ENCODE measurements at regions of chr1 and their contacts with region 1.

Region 1: GRCh38 chr1:151059078-151059907 is at the start of gene CDC42SE1:
- DNase-seq: peak in 1 of 2 experiments; percentile 85
- H3K4me3 ChIP-seq: peak within 1 kb of the TSS; percentile 80 to 97 (median 89)
- H3K27ac ChIP-seq: peak within 1 kb of the TSS; percentile 63
- H3K4me1 ChIP-seq: peaks cover 4 to 14% (median 6%) of the 10 kb centered on the region in 4 experiments; a peak in 6 of 7 replicates
- H3K27me3 ChIP-seq: no peaks in the 10 kb centered on the region
- CTCF ChIP-seq: peak; percentile 75 to 82 (median 80)
- EP300 ChIP-seq: peak in 1 of 2 experiments; percentile 4; a peak in 1 of 3 replicates
- POLR2A ChIP-seq: peak in 1 of 2 experiments; percentile 29; a peak in 1 of 3 replicates
- RAD21 ChIP-seq: peak; percentile 20 to 50; a peak in 3 of 4 replicates
- total RNA-seq, gene CDC42SE1: 67.8 and 74.1 TPM in 2 replicates

Region 2: GRCh38 chr1:151006327-151007052 is 52.8 kb before region 1 on chr1 and contains the start of gene MINDY1:
- CTCF ChIA-PET with region 1: interaction called, 5 read pairs
- POLR2A ChIA-PET with region 1: interaction called, 12 read pairs
- DNase-seq: peak; percentile 33 to 67
- H3K4me3 ChIP-seq: peak within 1 kb of the TSS; percentile 6 to 94 (median 41); a peak in 7 of 8 replicates
- H3K27ac ChIP-seq: peak within 1 kb of the TSS; percentile 53
- H3K4me1 ChIP-seq: peaks cover 9 to 12% (median 9%) of the 10 kb centered on the region in 4 experiments; a peak in 6 of 7 replicates
- H3K27me3 ChIP-seq: no peaks in the 10 kb centered on the region
- CTCF ChIP-seq: peak; percentile 53 to 70 (median 62)
- EP300 ChIP-seq: no peak
- POLR2A ChIP-seq: peak; percentile 43 to 84
- RAD21 ChIP-seq: peak; percentile 59 to 66
- total RNA-seq, gene MINDY1: 10.6 and 11.4 TPM in 2 replicates

Region 3: GRCh38 chr1:151024540-151025146 is 34.6 kb before region 1 on chr1:
- CTCF ChIA-PET with region 1: interaction called, 20 read pairs
- POLR2A ChIA-PET with region 1: interaction called, 3 read pairs
- DNase-seq: peak; percentile 73 to 94
- H3K4me3 ChIP-seq: no peak overlapping the region
- H3K27ac ChIP-seq: no peak overlapping the region
- H3K4me1 ChIP-seq: no peaks in the 10 kb centered on the region
- H3K27me3 ChIP-seq: no peaks in the 10 kb centered on the region
- CTCF ChIP-seq: peak; percentile 87 to 95 (median 94)
- EP300 ChIP-seq: no peak
- POLR2A ChIP-seq: no peak
- RAD21 ChIP-seq: peak; percentile 87 to 93

Region 4: GRCh38 chr1:151047925-151048645 is 11.2 kb before region 1 on chr1:
- CTCF ChIA-PET with region 1: interaction called, 95 read pairs
- POLR2A ChIA-PET with region 1: interaction called, 107 read pairs
- DNase-seq: peak in 1 of 2 experiments; percentile 85
- H3K4me3 ChIP-seq: peak overlapping the region; percentile 70 to 96 (median 84)
- H3K27ac ChIP-seq: peak overlapping the region; percentile 60
- H3K4me1 ChIP-seq: peaks cover 0 to 7% (median 3%) of the 10 kb centered on the region in 4 experiments; a peak in 4 of 7 replicates
- H3K27me3 ChIP-seq: no peaks in the 10 kb centered on the region
- CTCF ChIP-seq: peak; percentile 73 to 84 (median 82)
- EP300 ChIP-seq: no peak
- POLR2A ChIP-seq: peak; percentile 53 to 79
- RAD21 ChIP-seq: peak in 1 of 2 experiments; percentile 23; a peak in 2 of 4 replicates

Region 5: DNA sequence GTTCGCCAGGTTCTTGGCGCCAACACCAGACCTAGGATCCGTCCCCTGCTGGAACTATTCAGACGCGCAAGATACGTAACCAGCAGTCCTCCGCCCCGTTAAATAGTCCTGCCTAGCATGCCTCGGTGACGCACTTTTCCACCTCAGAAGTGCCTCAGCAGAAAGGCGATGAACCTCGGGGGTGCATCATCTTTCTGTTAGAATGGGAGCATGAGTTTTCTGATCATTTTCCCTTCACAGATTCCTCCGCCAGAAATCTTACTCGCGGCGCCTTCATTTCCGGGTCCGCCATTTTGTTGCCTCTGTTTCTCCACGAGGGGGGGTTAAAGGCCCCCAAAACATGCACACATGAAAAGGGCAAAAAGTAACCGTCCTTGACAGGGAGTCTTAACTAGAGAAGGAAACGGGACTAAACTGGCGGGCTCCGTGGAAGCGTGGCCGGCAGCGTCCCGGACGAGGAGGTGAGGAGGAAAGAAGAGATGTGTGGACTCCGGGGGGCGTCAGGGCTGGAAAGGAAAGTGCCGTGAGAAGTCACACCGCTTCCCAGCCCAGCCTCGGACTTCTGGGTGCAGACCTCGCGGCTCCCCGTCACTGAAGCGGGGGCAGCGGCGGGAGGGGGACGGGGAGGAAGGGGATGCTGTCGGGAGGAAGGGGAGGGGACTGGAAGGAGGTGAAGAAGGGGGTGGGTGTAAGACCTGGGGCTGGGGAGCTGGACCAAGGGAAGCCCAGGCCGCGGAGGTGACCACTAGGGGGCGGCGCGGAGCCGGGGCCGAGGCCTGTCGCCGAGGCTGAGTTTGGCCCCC is 11.4 kb after region 1 on chr1 and contains the start of gene GABPB2:
- CTCF ChIA-PET with region 1: interaction called, 54 read pairs
- POLR2A ChIA-PET with region 1: interaction called, 47 read pairs
- DNase-seq: peak; percentile 77 to 98
- H3K4me3 ChIP-seq: peak within 1 kb of the TSS; percentile 83 to 94 (median 92)
- H3K27ac ChIP-seq: peak within 1 kb of the TSS; percentile 98
- H3K4me1 ChIP-seq: peaks cover 0 to 4% (median under 1%) of the 10 kb centered on the region in 4 experiments; a peak in 1 of 7 replicates
- H3K27me3 ChIP-seq: no peaks in the 10 kb centered on the region
- CTCF ChIP-seq: peak; percentile 80 to 90 (median 83)
- EP300 ChIP-seq: 0 out of 3 replicates have a peak, but pooled peaks of 1 of the 2 experiments have one; percentile 19
- POLR2A ChIP-seq: peak; percentile 74 to 78; a peak in 1 of 3 replicates
- RAD21 ChIP-seq: peak; percentile 61 to 63
- total RNA-seq, gene GABPB2: 1.9 and 2.4 TPM in 2 replicates